Activated CD4-positive, alpha-beta T cell treated with anti-CD3 and anti-CD28 coated beads, Interleukin-2, amount 10 ng/mL, durations not matched to agents 24 days and 14 days (primary cell): ENCODE measurements at regions of chr15 and their contacts with region 1.

Region 1: DNA sequence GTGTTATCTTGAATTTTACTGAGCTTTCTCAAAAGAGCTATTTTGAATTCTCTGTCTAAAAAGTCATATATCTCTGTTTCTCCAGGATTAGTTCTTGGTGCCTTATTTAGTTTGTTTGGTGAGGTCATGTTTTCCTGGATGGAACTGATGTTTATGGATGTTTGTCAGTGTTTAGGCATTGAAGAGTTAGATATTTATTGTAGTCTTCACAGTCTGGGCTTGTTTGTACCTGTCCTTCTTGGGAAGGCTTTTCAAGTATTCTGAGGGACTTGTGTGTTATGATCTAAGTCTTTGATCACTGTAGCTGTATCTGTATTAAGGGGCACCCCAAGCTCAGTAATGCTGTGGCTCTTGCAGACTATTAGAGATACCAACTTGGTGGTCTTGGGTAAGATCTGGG is 10.6 kb upstream of the RAD51 start:
- DNase-seq: no peak
- H3K4me3 Mint-ChIP-seq: no peak overlapping the region
- H3K27ac Mint-ChIP-seq: no peak overlapping the region
- H3K4me1 Mint-ChIP-seq: no peaks in the 10 kb centered on the region
- H3K27me3 Mint-ChIP-seq: no peaks in the 10 kb centered on the region

Region 2: DNA sequence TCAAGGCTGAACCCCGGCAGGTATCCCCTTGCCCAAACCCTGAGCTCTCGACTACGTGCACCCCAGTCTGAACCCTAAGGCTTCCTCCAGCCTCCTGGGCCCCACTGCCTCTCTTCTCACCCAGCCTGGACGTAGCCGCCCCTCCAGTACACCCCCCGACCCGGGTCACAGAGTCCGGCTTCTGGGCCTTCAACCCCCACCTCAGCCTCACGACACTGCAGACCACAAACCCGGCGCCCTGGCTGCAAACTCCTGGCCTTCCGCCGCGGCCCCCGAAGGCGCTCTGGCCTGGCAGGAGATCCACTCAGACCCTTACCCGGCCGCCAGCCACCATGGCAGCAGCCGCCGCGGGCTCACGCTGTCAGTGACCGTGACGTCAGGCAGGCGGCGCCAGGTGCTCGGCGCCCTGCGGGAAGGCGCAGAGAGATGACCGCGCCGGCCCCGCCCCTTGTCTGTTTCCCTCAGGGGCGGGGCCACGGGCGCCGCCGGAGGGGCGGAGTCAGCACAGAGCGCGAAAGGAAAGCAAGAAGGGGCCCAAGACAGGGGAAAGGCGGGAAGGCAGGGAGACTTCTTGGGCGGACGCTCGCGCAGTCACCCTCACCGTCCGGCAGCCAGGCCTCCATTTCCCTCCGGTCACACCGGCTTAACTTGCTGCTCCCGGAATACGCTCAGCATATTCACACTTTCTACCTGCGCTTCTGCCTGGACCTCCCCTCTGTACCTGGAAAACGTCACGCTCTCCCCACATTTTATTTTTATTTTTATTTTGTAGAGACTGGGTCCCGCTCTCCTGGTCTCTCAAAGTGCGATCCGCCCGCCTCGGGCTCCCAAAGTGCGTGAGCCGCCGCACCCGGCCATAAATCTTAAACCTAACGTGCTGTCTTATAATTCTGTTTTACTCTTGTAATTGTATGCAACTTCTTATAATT is 70.8 kb after region 1 on chr15 and contains the start of gene RMDN3:
- intact Hi-C with region 1: loop called (anchors 5 kb)
- DNase-seq: peak; percentile 99
- H3K4me3 Mint-ChIP-seq: peak within 1 kb of the TSS; percentile 98
- H3K27ac Mint-ChIP-seq: peak within 1 kb of the TSS; percentile 98
- H3K4me1 Mint-ChIP-seq: peaks cover 38% of the 10 kb centered on the region
- H3K27me3 Mint-ChIP-seq: no peaks in the 10 kb centered on the region
- total RNA-seq, gene RMDN3: 36.1 and 38.9 TPM in 2 replicates

Region 3: GRCh38 chr15:40782580-40783227 is 98.3 kb after region 1 on chr15:
- intact Hi-C with region 1: loop called (anchors 2 kb)
- DNase-seq: peak; percentile 94
- H3K4me3 Mint-ChIP-seq: no peak overlapping the region
- H3K27ac Mint-ChIP-seq: no peak overlapping the region
- H3K4me1 Mint-ChIP-seq: peaks cover 19% of the 10 kb centered on the region
- H3K27me3 Mint-ChIP-seq: no peaks in the 10 kb centered on the region